ENCODE measurements at regions of chr2 and their contacts with region 1.

Region 1: GRCh38 chr2:177263451-177264208 is 897 bp downstream of the NFE2L2 start:
- DNase-seq: peak; percentile 96
- ATAC-seq: peak; percentile 61
- H3K4me3 ChIP-seq: peak overlapping the region; percentile 94 to 99 (median 98)
- H3K27ac ChIP-seq: peak overlapping the region; percentile 100
- H3K4me1 ChIP-seq: peaks cover 66% of the 10 kb centered on the region
- H3K27me3 ChIP-seq: no peaks in the 10 kb centered on the region; a peak in 1 of 5 replicates
- CTCF ChIP-seq: peak; percentile 98
- EP300 ChIP-seq: peak; percentile 92 to 99
- POLR2A ChIP-seq: peak; percentile 78 to 89
- RAD21 ChIP-seq: peak; percentile 99

Region 2: DNA sequence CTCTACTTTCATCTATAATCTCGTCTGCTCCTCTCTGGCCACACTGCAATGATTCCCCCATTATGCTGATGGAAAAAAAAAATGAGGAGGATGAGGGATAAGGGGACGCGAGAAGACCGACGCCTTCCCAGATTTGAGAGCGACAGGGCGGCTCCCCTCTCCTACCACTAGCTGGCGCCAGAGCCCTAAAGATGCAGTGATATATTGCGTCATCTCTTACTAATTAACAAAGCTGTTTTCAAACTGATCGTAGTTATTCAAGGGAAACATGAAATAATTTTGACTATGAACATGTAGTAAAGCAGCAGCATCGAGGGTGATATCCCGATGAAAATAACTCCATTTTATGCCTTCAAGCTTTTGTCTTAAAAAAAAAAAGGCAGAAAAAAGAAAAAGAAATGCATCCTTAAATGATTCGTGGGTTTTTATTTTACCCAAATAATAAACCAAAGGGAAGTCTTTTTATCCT is 99.0 kb before region 1 on chr2:
- CTCF ChIA-PET with region 1: interaction called, 13 read pairs
- POLR2A ChIA-PET with region 1: interaction called, 81 read pairs
- in situ Hi-C with region 1: loop called (anchors 5 kb)
- intact Hi-C with region 1: loop called (anchors 1 kb)
- DNase-seq: peak; percentile 82
- ATAC-seq: peak; percentile 52
- H3K4me3 ChIP-seq: peak overlapping the region; percentile 29 to 52 (median 52); a peak in 5 of 6 replicates
- H3K27ac ChIP-seq: peak overlapping the region; percentile 81
- H3K4me1 ChIP-seq: peaks cover 65% of the 10 kb centered on the region
- H3K27me3 ChIP-seq: peaks cover 0 to 4% of the 10 kb centered on the region in 2 experiments; a peak in 1 of 5 replicates
- CTCF ChIP-seq: peak; percentile 99
- EP300 ChIP-seq: peak; percentile 54 to 55; a peak in 3 of 4 replicates
- POLR2A ChIP-seq: no peak
- RAD21 ChIP-seq: peak; percentile 98

Region 3: DNA sequence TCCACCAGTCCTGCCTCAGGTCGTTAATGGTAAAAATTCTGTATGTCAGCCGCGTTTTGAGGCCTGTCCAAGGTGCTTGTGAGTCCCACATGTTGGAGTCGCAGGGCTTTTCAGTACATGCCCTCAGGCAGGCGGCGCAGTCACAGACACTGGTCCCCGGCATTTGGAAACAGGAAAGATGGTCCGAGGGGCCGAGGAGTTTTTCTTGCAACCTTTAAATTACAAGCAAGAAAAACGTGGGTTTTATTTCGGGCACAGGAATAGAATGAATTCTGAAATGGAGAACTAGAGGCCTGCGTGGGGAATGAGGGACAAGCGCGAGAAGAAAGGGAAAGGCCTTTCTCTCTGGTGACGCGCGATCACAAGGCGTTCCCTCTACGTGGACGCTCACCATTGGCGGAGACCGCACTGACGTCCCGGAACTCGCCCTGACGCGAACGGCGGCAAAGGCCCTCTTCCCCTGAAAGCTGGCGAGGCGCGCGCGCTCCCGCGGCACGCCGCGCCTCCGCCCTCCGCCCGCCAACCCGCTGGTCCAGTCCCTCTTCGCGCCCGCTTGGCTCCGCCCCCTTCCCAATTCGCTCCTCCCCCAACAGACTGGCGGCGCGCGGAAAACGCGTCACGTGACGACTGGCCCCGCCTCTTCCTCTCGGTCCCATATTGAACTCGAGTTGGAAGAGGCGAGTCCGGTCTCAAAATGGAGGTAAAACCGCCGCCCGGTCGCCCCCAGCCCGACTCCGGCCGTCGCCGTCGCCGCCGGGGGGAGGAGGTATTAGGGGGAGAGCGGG is 51.3 kb before region 1 on chr2 and contains the start of gene HNRNPA3:
- CTCF ChIA-PET with region 1: no interaction called
- POLR2A ChIA-PET with region 1: interaction called, 60 read pairs
- in situ Hi-C with region 1: loop called (anchors 5 kb)
- intact Hi-C with region 1: loop called (anchors 1 kb)
- DNase-seq: peak; percentile 98
- ATAC-seq: peak; percentile 93
- H3K4me3 ChIP-seq: peak within 1 kb of the TSS; percentile 85 to 86 (median 86)
- H3K27ac ChIP-seq: peak within 1 kb of the TSS; percentile 99
- H3K4me1 ChIP-seq: peaks cover 52% of the 10 kb centered on the region
- H3K27me3 ChIP-seq: no peaks in the 10 kb centered on the region; a peak in 1 of 5 replicates
- CTCF ChIP-seq: peak; percentile 48
- EP300 ChIP-seq: no peak; a peak in 1 of 4 replicates
- POLR2A ChIP-seq: peak; percentile 84 to 98
- RAD21 ChIP-seq: peak; percentile 38; the same call in 1 of the 2 replicates
- total RNA-seq, gene HNRNPA3: 97.7 and 164 TPM in 2 replicates

Region 4: DNA sequence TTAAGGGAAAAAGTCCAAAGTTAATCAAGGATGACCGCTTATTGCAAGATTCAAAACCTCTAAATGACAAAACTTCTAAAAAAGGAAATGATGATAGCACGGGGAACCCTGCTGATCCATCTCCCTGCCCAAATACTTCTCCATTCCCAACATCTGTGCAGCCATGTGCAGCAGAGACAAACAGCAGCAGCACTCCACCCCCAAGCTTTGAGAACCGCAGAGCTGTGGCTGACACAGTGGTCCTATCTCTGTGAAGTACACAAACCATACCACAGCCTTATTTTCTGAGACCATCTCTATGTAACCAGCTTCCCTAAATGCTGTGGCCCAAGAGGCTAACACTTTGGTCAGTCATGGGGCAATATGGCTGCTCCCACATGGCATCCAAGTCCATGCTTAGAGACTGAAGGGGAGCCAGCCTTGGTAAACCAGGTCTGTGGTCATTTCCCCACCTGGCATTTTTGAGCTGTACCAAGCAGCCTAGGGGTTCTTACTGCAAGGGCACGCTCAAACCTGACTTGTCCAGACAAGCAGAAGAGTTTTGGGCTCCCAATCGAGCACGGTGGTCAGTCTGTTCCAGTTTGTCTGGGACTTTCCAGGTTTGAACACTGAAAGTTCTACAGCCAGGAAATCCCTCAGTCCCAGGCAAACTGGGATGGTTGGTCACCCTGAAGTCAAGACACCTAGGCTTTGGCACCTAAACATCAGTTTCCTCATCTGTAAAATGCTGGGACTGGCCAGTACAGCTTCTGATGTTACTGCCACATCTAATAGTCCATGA is 18.0 kb after region 1 on chr2:
- CTCF ChIA-PET with region 1: no interaction called
- POLR2A ChIA-PET with region 1: interaction called, 33 read pairs
- in situ Hi-C with region 1: no loop called
- intact Hi-C with region 1: no loop called
- DNase-seq: no peak
- ATAC-seq: peak; percentile 26
- H3K4me3 ChIP-seq: no peak overlapping the region
- H3K27ac ChIP-seq: no peak overlapping the region
- H3K4me1 ChIP-seq: peaks cover 37% of the 10 kb centered on the region
- H3K27me3 ChIP-seq: no peaks in the 10 kb centered on the region
- CTCF ChIP-seq: no peak
- EP300 ChIP-seq: no peak
- POLR2A ChIP-seq: no peak
- RAD21 ChIP-seq: no peak

Region 5: DNA sequence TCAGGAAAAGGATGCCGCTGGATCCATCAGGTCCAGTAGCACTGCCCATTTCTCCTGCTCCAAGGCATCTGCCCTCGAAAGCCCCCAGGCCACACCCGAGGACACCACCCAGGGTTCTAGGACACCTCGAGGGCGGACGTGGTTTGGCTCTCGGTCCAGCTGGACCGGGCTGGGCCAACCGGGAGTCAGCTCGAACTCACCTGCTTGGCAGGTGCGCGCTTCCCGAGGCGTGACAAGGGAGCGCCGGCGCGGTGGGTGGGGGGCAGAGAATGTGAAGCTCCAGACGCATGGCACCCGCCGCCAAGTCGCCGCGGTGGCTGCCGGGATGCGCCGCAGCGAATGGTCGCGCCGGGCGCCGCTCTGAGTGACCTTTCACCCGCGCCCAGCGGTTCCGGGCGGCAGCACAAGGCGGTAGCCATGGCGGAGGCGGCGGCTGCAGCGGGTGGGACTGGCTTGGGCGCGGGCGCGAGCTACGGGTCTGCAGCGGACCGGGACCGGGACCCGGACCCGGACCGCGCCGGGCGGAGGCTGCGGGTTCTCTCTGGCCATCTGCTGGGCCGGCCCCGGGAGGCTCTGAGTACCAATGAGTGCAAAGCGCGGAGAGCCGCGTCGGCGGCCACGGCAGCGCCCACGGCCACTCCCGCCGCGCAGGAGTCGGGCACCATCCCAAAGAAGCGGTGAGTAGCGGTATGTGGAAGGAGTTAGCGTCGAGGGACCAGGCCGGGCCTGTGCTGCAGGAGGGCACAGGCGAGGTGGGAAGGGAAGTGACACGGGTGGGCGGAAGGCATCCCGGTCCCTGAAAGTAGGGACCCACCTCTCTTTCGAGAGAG is 129.0 kb after region 1 on chr2 and contains the start of gene AGPS:
- CTCF ChIA-PET with region 1: no interaction called
- POLR2A ChIA-PET with region 1: interaction called, 22 read pairs
- in situ Hi-C with region 1: loop called (anchors 5 kb)
- intact Hi-C with region 1: no loop called
- DNase-seq: peak; percentile 73
- ATAC-seq: peak; percentile 93
- H3K4me3 ChIP-seq: peak within 1 kb of the TSS; percentile 91 to 98 (median 92)
- H3K27ac ChIP-seq: peak within 1 kb of the TSS; percentile 86
- H3K4me1 ChIP-seq: peaks cover 56% of the 10 kb centered on the region
- H3K27me3 ChIP-seq: no peaks in the 10 kb centered on the region; a peak in 1 of 5 replicates
- CTCF ChIP-seq: peak; percentile 29; the same call in 1 of the 2 replicates
- EP300 ChIP-seq: peak in 1 of 2 experiments; percentile 35; a peak in 1 of 4 replicates
- POLR2A ChIP-seq: peak; percentile 79 to 94
- RAD21 ChIP-seq: peak; percentile 77
- total RNA-seq, gene AGPS: 99.0 and 159 TPM in 2 replicates

Region 6: GRCh38 chr2:177419274-177419673 is 155.6 kb after region 1 on chr2:
- CTCF ChIA-PET with region 1: interaction called, 6 read pairs
- POLR2A ChIA-PET with region 1: interaction called, 8 read pairs
- in situ Hi-C with region 1: no loop called
- intact Hi-C with region 1: loop called (anchors 5 kb)
- DNase-seq: no peak
- ATAC-seq: no peak
- H3K4me3 ChIP-seq: no peak overlapping the region
- H3K27ac ChIP-seq: no peak overlapping the region
- H3K4me1 ChIP-seq: peaks cover 58% of the 10 kb centered on the region
- H3K27me3 ChIP-seq: no peaks in the 10 kb centered on the region
- CTCF ChIP-seq: no peak
- EP300 ChIP-seq: no peak
- POLR2A ChIP-seq: no peak
- RAD21 ChIP-seq: no peak